Activated naive CD4-positive, alpha-beta T cell treated with anti-CD3 and anti-CD28 coated beads for 36 hours (primary cell): ENCODE measurements at regions of chr12 and their contacts with region 1.

Region 1: DNA sequence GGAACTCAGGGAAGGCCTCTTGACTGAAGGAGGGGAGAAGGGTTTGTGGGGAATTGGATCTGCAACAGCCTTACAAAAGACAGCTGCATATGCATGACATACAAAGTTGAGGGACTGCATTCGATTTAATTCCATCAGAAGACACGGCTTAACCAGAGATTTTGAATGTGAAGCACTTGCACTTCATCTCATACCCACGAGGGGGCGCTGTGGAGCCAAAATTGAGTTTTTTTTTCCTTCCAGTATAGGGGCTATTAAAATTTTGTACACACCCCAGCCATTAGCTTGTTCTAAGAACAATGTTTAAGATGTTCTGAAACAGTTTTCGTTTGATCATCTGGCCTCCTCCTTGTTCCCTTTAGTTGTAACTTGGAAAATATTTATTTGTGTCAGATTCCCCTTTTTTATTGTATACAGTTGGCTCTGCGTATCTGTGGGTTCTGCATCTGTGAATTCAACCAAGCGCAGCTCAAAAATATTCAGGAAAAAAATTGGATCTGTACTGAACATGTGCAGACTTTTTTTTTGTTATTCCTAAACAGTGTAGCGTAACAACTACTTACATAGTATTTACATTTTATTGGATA is 1.6 kb downstream of the SUDS3 start:
- DNase-seq: peak; percentile 86
- H3K4me3 Mint-ChIP-seq: peak overlapping the region; percentile 94
- H3K27ac Mint-ChIP-seq: peak overlapping the region; percentile 33
- H3K4me1 Mint-ChIP-seq: peaks cover 33% of the 10 kb centered on the region
- H3K27me3 Mint-ChIP-seq: no peaks in the 10 kb centered on the region

Region 2: GRCh38 chr12:117936722-117937484 is 441.1 kb before region 1 on chr12:
- CTCF ChIA-PET with region 1: interaction called, 10 read pairs
- intact Hi-C with region 1: no loop called
- DNase-seq: no peak
- H3K4me3 Mint-ChIP-seq: no peak overlapping the region
- H3K27ac Mint-ChIP-seq: no peak overlapping the region
- H3K4me1 Mint-ChIP-seq: no peaks in the 10 kb centered on the region
- H3K27me3 Mint-ChIP-seq: peaks cover 10% of the 10 kb centered on the region

Region 3: DNA sequence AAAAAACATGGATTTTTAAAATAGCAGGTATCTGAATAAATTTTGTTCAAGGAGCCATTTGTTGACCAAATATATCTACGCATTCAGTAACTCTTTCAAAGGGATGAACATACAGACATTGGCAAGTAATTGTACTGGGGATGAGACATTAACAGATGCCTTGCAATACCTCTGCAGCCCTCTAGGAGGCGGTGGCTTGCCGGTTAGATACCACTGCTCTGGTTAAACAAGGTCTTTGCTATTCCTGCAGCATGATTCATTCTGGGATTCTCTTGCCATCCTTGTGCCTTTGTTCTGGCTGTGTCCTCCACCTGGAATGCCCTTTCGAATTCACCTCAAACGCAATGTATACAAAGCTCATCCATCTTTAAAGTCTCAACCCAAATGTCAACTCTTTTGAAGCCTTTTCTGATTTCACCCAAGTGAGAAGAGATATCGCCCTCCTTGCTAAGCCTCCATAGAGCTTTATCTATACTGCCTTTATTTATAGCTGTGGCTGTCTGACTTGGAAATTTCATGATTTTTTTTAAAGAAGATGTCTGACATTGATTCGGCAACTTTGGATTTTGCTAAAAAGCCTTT is 472.4 kb after region 1 on chr12:
- CTCF ChIA-PET with region 1: no interaction called
- intact Hi-C with region 1: loop called (anchors 1 kb)
- DNase-seq: peak; percentile 28
- H3K4me3 Mint-ChIP-seq: no peak overlapping the region
- H3K27ac Mint-ChIP-seq: no peak overlapping the region
- H3K4me1 Mint-ChIP-seq: no peaks in the 10 kb centered on the region
- H3K27me3 Mint-ChIP-seq: peaks cover 2% of the 10 kb centered on the region